Caco-2 (cell line): ENCODE measurements at regions of chr10 and their contacts with region 1.

Region 1: DNA sequence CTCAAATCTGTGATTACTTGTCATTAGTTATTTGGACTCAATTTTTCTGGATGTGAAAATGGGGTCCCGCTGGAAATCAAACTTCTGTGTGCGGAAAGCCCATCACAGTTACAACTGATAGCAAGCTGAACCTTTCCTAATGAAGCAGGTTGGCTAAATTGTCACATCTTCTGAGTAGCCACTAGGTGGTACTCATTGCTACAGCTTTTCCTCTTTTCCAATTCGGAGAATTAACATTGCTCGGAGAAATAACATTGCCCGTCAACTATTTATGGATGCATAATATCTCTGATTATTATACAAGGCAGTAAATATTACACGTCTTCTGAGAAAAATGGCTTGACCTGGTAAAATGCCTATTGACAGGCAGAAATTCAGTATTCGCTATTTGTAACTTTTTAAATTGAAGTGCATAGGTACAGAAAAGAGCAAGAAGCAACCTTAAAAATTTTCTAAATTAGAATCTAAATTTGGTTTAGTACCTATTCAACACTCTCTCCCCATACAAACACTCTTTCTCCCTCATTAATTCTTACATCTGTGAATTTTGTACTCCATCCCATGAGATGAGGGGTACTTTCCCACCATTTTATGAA is 17.3 kb upstream of the BLOC1S2 start:
- DNase-seq: no peak
- H3K4me3 ChIP-seq: no peak overlapping the region
- H3K4me3 Mint-ChIP-seq: no peak overlapping the region
- H3K27ac Mint-ChIP-seq: no peak overlapping the region
- H3K4me1 ChIP-seq: peaks cover 29% of the 10 kb centered on the region
- H3K4me1 Mint-ChIP-seq: peaks cover 27% of the 10 kb centered on the region
- H3K27me3 ChIP-seq: no peaks in the 10 kb centered on the region
- H3K27me3 Mint-ChIP-seq: no peaks in the 10 kb centered on the region
- CTCF ChIP-seq: peak; percentile 59 to 70

Region 2: DNA sequence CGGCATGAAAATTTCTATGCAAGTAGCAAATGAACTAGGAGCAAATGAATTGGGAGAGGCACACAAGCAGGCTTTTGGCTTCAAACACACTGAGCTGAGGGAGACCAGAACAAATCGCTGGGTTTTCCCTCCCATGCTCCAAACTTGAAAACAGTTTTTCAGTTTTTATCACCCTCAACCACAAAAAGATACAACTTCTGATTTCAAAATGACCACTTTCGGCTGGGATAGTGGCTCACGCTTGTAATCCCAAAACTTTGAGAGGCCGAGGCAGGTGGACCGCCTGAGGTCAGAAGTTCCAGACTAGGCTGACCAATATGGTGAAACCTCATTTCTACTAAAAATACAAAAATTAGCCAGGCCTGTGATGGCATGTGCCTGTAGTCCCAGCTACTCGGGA is 65.4 kb before region 1 on chr10:
- CTCF ChIA-PET with region 1: no interaction called
- POLR2A ChIA-PET with region 1: no interaction called
- intact Hi-C with region 1: no loop called
- DNase-seq: no peak
- H3K4me3 ChIP-seq: no peak overlapping the region
- H3K4me3 Mint-ChIP-seq: no peak overlapping the region
- H3K27ac Mint-ChIP-seq: no peak overlapping the region
- H3K4me1 ChIP-seq: no peaks in the 10 kb centered on the region; the same call in 1 of the 2 replicates
- H3K4me1 Mint-ChIP-seq: no peaks in the 10 kb centered on the region
- H3K27me3 ChIP-seq: no peaks in the 10 kb centered on the region
- H3K27me3 Mint-ChIP-seq: no peaks in the 10 kb centered on the region
- CTCF ChIP-seq: no peak

Region 3: GRCh38 chr10:100267237-100268104 is 36.4 kb before region 1 on chr10 and contains the start of gene CWF19L1:
- CTCF ChIA-PET with region 1: no interaction called
- POLR2A ChIA-PET with region 1: no interaction called
- intact Hi-C with region 1: loop called (anchors 1 kb)
- DNase-seq: peak; percentile 90 to 91
- H3K4me3 ChIP-seq: peak within 1 kb of the TSS; percentile 89
- H3K4me3 Mint-ChIP-seq: peak within 1 kb of the TSS; percentile 99
- H3K27ac Mint-ChIP-seq: peak within 1 kb of the TSS; percentile 99
- H3K4me1 ChIP-seq: no peaks in the 10 kb centered on the region
- H3K4me1 Mint-ChIP-seq: peaks cover 6% of the 10 kb centered on the region
- H3K27me3 ChIP-seq: no peaks in the 10 kb centered on the region
- H3K27me3 Mint-ChIP-seq: no peaks in the 10 kb centered on the region
- CTCF ChIP-seq: no peak
- total RNA-seq, gene CWF19L1: 41.1 and 41.2 TPM in 2 replicates

Region 4: DNA sequence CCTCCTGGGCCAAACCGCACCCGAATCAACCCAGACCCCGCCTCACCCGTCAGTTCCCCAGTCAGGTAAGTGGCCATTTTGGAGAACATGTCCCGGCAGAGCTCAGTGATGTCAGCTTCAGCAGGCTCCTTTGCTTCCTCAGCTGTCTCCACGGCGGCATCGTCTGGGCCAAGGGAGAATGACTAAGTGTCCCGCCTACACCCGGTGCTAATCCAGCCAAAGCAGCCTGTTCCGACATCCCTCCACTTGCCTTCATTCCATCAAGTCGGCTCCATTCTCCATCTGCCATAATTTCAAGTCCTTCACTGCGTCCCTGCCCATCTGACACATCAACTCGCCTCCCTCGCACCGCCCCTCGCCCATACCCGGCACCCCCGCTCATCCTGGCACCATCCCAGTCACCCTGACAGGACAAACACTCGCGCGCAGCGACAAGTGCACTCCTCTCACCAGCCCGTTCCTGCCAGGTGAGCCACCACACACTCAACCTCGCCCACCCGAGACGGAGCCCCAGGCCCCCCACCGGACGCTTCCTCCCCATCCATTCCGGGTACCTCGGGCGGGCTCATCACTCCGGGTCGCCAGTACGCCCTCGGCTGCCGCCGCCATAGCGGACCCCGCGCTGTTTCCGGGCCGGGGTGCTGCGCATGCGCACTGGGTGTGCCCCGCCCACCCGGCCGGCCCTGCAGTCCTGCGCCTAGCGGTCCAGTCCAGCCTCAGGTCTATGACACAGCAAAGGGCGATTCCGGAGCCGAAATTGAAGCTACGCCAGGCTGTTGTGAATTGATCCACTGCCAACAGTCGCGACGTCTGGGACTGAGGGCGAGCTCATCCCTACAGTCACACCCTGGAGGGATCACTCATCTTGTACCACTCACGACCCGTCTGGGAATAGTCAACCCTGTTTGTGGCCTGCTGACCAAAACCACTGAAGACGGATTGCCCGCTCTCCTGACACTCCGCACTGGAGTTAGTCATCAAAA is 17.5 kb before region 1 on chr10 and contains the start of gene BLOC1S2:
- CTCF ChIA-PET with region 1: interaction called, 5 read pairs
- POLR2A ChIA-PET with region 1: no interaction called
- intact Hi-C with region 1: loop called (anchors 2 kb)
- DNase-seq: peak; percentile 83 to 95
- H3K4me3 ChIP-seq: peak within 1 kb of the TSS; percentile 97
- H3K4me3 Mint-ChIP-seq: peak within 1 kb of the TSS; percentile 99
- H3K27ac Mint-ChIP-seq: peak within 1 kb of the TSS; percentile 94
- H3K4me1 ChIP-seq: peaks cover 9% of the 10 kb centered on the region
- H3K4me1 Mint-ChIP-seq: peaks cover 15% of the 10 kb centered on the region
- H3K27me3 ChIP-seq: no peaks in the 10 kb centered on the region
- H3K27me3 Mint-ChIP-seq: no peaks in the 10 kb centered on the region
- CTCF ChIP-seq: no peak
- total RNA-seq, gene BLOC1S2: 51.9 and 52.8 TPM in 2 replicates

Region 5: GRCh38 chr10:100433253-100434240 is 129.7 kb after region 1 on chr10:
- CTCF ChIA-PET with region 1: no interaction called
- POLR2A ChIA-PET with region 1: no interaction called
- intact Hi-C with region 1: loop called (anchors 1 kb)
- DNase-seq: peak; percentile 95
- H3K4me3 ChIP-seq: no peak overlapping the region
- H3K4me3 Mint-ChIP-seq: no peak overlapping the region
- H3K27ac Mint-ChIP-seq: no peak overlapping the region
- H3K4me1 ChIP-seq: no peaks in the 10 kb centered on the region
- H3K4me1 Mint-ChIP-seq: no peaks in the 10 kb centered on the region
- H3K27me3 ChIP-seq: no peaks in the 10 kb centered on the region
- H3K27me3 Mint-ChIP-seq: no peaks in the 10 kb centered on the region
- CTCF ChIP-seq: peak; percentile 96 to 97